ENCODE measurements at regions of chr5 and their contacts with region 1.

Region 1: GRCh38 chr5:130141659-130142320 is 237.5 kb downstream of the CHSY3 start:
- DNase-seq: peak; percentile 57
- H3K4me3 ChIP-seq: no peak overlapping the region
- H3K27ac ChIP-seq: no peak overlapping the region
- H3K4me1 ChIP-seq: no peaks in the 10 kb centered on the region
- H3K27me3 ChIP-seq: no peaks in the 10 kb centered on the region
- CTCF ChIP-seq: peak; percentile 57 to 75
- POLR2A ChIP-seq: no peak

Region 2: DNA sequence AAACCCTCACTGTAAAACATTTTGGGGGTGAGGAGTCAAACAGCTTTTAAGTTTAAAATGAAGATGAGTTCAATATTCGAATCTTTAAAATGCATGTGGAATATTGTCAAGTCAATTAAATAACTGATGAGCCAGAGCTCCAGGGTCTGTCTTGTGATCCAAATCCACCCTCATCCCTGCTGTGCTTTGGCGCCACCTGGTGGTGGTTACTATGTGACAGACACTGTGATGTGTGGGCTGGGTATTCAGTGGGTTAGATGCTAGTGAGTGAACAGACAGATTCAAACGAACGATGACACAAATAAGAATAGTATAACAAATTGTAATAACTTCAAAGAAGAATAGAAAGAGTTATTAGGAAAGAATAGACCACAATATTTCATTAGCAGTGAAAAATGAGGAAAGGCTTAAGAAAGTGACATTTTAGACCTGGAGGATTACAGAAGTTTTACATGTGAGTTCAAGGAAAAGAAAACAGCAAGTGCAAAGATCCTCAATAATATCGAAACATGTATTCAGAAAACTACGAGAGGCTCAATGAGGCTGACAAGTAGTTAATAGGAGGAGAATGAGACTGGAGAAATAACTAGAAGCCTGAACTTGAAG is 288.9 kb before region 1 on chr5:
- CTCF ChIA-PET with region 1: interaction called, 4 read pairs
- POLR2A ChIA-PET with region 1: no interaction called
- dilution Hi-C with region 1: no loop called
- intact Hi-C with region 1: loop called (anchors 5 kb)
- DNase-seq: peak; percentile 76
- H3K4me3 ChIP-seq: no peak overlapping the region
- H3K27ac ChIP-seq: no peak overlapping the region
- H3K4me1 ChIP-seq: peaks cover 10% of the 10 kb centered on the region
- H3K27me3 ChIP-seq: peaks cover 0 to 3% of the 10 kb centered on the region in 2 experiments
- CTCF ChIP-seq: peak; percentile 84 to 93
- POLR2A ChIP-seq: no peak

Region 3: DNA sequence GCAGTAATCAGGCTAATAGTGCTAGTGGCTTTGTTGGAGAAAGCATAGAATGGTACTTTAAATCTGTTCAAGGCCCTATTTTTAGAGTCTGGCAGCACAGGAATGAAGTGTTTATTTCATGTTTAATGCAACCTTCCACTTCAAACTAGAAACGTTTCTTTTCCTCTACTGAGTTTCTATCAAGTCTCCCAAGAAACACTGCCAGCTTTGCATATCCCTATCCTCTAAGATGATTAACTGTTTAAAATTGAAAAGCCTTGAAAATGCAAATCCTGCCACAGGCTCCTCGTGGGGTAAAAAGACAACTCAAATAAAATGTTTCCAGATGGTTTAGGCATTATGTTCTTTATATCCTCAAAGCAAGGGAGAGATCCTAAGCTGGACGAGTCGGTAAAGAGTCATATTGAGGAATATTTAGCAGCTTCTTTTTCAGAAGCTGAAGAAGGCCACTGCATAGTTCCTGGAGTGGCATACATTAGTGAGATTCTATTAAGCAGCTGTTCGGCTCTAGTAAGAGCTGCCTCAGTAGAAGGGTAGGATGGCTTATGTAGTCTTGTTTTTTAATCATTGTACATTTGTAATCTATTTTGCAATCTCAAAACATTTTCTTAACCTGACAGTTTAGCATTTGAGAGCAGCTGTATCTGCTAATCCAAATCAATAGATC is 13.7 kb after region 1 on chr5:
- CTCF ChIA-PET with region 1: interaction called, 12 read pairs
- POLR2A ChIA-PET with region 1: no interaction called
- dilution Hi-C with region 1: no loop called
- intact Hi-C with region 1: no loop called
- DNase-seq: no peak
- H3K4me3 ChIP-seq: no peak overlapping the region
- H3K27ac ChIP-seq: no peak overlapping the region
- H3K4me1 ChIP-seq: no peaks in the 10 kb centered on the region
- H3K27me3 ChIP-seq: no peaks in the 10 kb centered on the region
- CTCF ChIP-seq: no peak
- POLR2A ChIP-seq: no peak

Measured in endothelial cell of umbilical vein (primary cell).